T-cell (primary cell): ENCODE measurements at regions of chr1 and their contacts with region 1.

Region 1: DNA sequence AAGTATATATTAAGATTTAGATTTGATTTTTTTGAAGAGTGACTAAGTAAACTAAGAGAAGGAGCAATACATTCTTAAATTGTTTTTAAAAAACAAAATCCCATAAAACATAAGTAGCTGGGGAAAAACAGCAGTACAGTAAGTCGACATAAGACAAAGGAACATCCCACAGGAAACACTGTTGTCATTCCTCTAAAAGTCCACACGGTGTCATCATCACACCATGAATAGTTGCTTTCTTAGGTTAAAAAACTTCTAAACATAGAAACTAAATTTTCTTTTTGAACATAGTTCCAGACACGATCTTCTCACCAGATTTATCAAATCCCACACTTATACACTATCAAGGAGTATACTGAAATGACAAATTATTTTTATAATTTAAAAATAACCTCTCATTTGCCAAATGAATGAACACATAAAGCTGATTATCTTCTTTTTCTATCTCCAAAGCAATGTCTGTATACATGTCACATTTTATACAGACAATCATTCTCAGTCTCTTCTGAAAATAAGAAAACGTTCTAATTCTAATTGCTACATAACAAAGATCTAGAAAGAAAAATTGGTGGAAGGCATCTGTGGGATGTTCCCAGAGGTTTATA is 15.8 kb downstream of the ODF2L start:
- DNase-seq: peak in 2 of 35 experiments; percentile 13 to 81
- ATAC-seq: peak; percentile 27 to 65 (median 58)
- H3K4me3 ChIP-seq: no peak overlapping the region
- H3K4me3 Mint-ChIP-seq: no peak overlapping the region
- H3K27ac ChIP-seq: no peak overlapping the region
- H3K27ac Mint-ChIP-seq: no peak overlapping the region
- H3K4me1 ChIP-seq: peaks cover 0 to 6% of the 10 kb centered on the region in 2 experiments
- H3K4me1 Mint-ChIP-seq: peaks cover 0 to 19% (median 13%) of the 10 kb centered on the region in 3 donors
- H3K27me3 ChIP-seq: no peaks in the 10 kb centered on the region
- H3K27me3 Mint-ChIP-seq: no peaks in the 10 kb centered on the region

Region 2: GRCh38 chr1:85957760-85958159 is 422.6 kb before region 1 on chr1:
- CTCF ChIA-PET with region 1: no interaction called
- POLR2A ChIA-PET with region 1: no interaction called
- DNase-seq: no peak
- ATAC-seq: no peak
- H3K4me3 ChIP-seq: no peak overlapping the region
- H3K4me3 Mint-ChIP-seq: no peak overlapping the region
- H3K27ac ChIP-seq: no peak overlapping the region
- H3K27ac Mint-ChIP-seq: no peak overlapping the region
- H3K4me1 ChIP-seq: no peaks in the 10 kb centered on the region
- H3K4me1 Mint-ChIP-seq: no peaks in the 10 kb centered on the region
- H3K27me3 ChIP-seq: no peaks in the 10 kb centered on the region
- H3K27me3 Mint-ChIP-seq: no peaks in the 10 kb centered on the region

Region 3: GRCh38 chr1:86395771-86396497 is 15.6 kb after region 1 on chr1 and contains the start of gene ODF2L:
- CTCF ChIA-PET with region 1: interaction called, 3 to 17 read pairs
- POLR2A ChIA-PET with region 1: interaction called, 10 to 12 read pairs
- DNase-seq: peak; percentile 73 to 92 (median 85)
- ATAC-seq: peak; percentile 99 to 100 (median 100)
- H3K4me3 ChIP-seq: peak within 1 kb of the TSS; percentile 93 to 98
- H3K4me3 Mint-ChIP-seq: peak within 1 kb of the TSS; percentile 91 to 98 (median 95)
- H3K27ac ChIP-seq: peak within 1 kb of the TSS; percentile 94
- H3K27ac Mint-ChIP-seq: peak within 1 kb of the TSS; percentile 93 to 97
- H3K4me1 ChIP-seq: peaks cover 7 to 19% of the 10 kb centered on the region in 2 experiments
- H3K4me1 Mint-ChIP-seq: peaks cover 53 to 57% (median 54%) of the 10 kb centered on the region in 3 donors
- H3K27me3 ChIP-seq: no peaks in the 10 kb centered on the region
- H3K27me3 Mint-ChIP-seq: no peaks in the 10 kb centered on the region
- total RNA-seq, gene ODF2L: 52.5 to 83.9 (median 67.9) TPM

Region 4: GRCh38 chr1:86470859-86471258 is 90.5 kb after region 1 on chr1:
- CTCF ChIA-PET with region 1: interaction called, 8 to 13 read pairs
- POLR2A ChIA-PET with region 1: no interaction called
- DNase-seq: no peak
- ATAC-seq: no peak
- H3K4me3 ChIP-seq: no peak overlapping the region
- H3K4me3 Mint-ChIP-seq: no peak overlapping the region
- H3K27ac ChIP-seq: no peak overlapping the region
- H3K27ac Mint-ChIP-seq: no peak overlapping the region
- H3K4me1 ChIP-seq: no peaks in the 10 kb centered on the region
- H3K4me1 Mint-ChIP-seq: peaks cover 0 to 4% (median 0%) of the 10 kb centered on the region in 3 donors
- H3K27me3 ChIP-seq: peaks cover 0 to 4% of the 10 kb centered on the region in 2 experiments
- H3K27me3 Mint-ChIP-seq: peaks cover 8 to 12% of the 10 kb centered on the region in 2 donors

Region 5: GRCh38 chr1:86499987-86500593 is 119.7 kb after region 1 on chr1:
- CTCF ChIA-PET with region 1: interaction called, 12 to 22 read pairs
- POLR2A ChIA-PET with region 1: no interaction called
- DNase-seq: peak in 1 of 35 experiments; percentile 59
- ATAC-seq: peak; percentile 41 to 68 (median 52)
- H3K4me3 ChIP-seq: no peak overlapping the region
- H3K4me3 Mint-ChIP-seq: no peak overlapping the region
- H3K27ac ChIP-seq: no peak overlapping the region
- H3K27ac Mint-ChIP-seq: peak overlapping the region in 1 of 2 donors; percentile 1
- H3K4me1 ChIP-seq: peaks cover 0 to 18% of the 10 kb centered on the region in 2 experiments
- H3K4me1 Mint-ChIP-seq: peaks cover 7 to 17% (median 11%) of the 10 kb centered on the region in 3 donors
- H3K27me3 ChIP-seq: peaks cover 0 to 11% of the 10 kb centered on the region in 2 experiments
- H3K27me3 Mint-ChIP-seq: peaks cover 9 to 24% of the 10 kb centered on the region in 2 donors

Region 6: GRCh38 chr1:86507935-86508582 is 127.7 kb after region 1 on chr1:
- CTCF ChIA-PET with region 1: interaction called, 15 to 22 read pairs
- POLR2A ChIA-PET with region 1: no interaction called
- DNase-seq: peak in 8 of 35 experiments; percentile 3 to 37 (median 8)
- ATAC-seq: peak in 2 of 4 experiments; percentile 56 to 61
- H3K4me3 ChIP-seq: no peak overlapping the region
- H3K4me3 Mint-ChIP-seq: no peak overlapping the region
- H3K27ac ChIP-seq: no peak overlapping the region
- H3K27ac Mint-ChIP-seq: no peak overlapping the region
- H3K4me1 ChIP-seq: peaks cover 0 to 6% of the 10 kb centered on the region in 2 experiments
- H3K4me1 Mint-ChIP-seq: peaks cover 0 to 6% (median 1%) of the 10 kb centered on the region in 3 donors
- H3K27me3 ChIP-seq: peaks cover 0 to 7% of the 10 kb centered on the region in 2 experiments
- H3K27me3 Mint-ChIP-seq: peaks cover 3 to 8% of the 10 kb centered on the region in 2 donors